HEK293 (cell line): ENCODE measurements at regions of chr7 and their contacts with region 1.

Region 1: DNA sequence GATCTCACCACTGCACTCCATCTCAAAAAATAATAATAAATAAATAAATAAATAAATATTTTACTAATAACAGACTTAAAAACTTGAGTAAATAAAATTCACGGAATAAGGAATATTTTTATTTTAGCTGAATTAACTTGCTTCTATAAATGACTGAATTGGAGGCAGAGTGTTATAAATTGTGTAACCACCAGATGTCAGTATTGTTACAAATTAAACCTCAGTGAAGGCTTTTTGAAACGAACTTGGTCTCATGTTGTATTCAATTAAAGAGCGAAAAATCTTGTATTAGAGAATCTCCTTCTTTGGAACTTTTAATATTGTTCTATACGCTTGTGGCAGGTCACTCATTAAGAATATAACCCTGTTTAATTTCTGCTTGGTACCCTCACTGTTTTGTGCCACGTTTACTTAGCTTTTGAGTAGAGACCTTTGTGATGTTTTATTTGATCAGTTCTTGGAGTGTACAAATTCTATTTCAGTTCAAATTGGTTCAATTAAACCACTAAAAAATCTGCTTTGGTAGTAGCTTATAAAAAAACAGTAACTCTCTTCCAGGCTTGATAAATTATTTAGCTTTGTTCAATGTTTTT is 45.6 kb upstream of the SCIN start:
- H3K4me3 ChIP-seq: no peak overlapping the region
- H3K27ac ChIP-seq: no peak overlapping the region
- H3K4me1 ChIP-seq: no peaks in the 10 kb centered on the region
- CTCF ChIP-seq: no peak

Region 2: GRCh38 chr7:12607134-12607533 is 82.2 kb after region 1 on chr7:
- CTCF ChIA-PET with region 1: interaction called, 11 read pairs
- POLR2A ChIA-PET with region 1: no interaction called
- H3K4me3 ChIP-seq: no peak overlapping the region
- H3K27ac ChIP-seq: no peak overlapping the region
- H3K4me1 ChIP-seq: no peaks in the 10 kb centered on the region
- CTCF ChIP-seq: no peak

Region 3: DNA sequence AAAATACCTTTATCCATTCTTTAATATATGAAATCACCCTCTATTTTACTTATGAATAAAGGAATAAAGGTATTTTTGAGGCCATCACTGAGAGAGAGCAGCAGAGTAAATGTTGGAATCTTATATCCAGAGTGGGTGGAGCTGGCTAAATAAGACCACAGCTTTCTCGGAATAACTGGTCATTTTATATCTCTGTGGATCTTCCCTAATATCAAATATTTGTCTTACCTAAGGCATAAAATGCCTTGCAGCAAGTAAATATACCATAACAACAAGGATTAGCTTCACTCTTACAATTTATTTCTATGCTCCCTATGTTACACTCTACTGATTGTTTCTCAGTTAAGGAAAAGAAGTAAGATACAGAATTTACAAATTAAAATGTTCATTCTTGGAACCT is 93.5 kb after region 1 on chr7:
- CTCF ChIA-PET with region 1: interaction called, 112 read pairs
- POLR2A ChIA-PET with region 1: no interaction called
- H3K4me3 ChIP-seq: no peak overlapping the region
- H3K27ac ChIP-seq: no peak overlapping the region
- H3K4me1 ChIP-seq: no peaks in the 10 kb centered on the region
- CTCF ChIP-seq: no peak

Region 4: GRCh38 chr7:12623897-12624498 is 99.1 kb after region 1 on chr7:
- CTCF ChIA-PET with region 1: interaction called, 112 read pairs
- POLR2A ChIA-PET with region 1: no interaction called
- H3K4me3 ChIP-seq: no peak overlapping the region
- H3K27ac ChIP-seq: no peak overlapping the region
- H3K4me1 ChIP-seq: no peaks in the 10 kb centered on the region
- CTCF ChIP-seq: no peak

Region 5: DNA sequence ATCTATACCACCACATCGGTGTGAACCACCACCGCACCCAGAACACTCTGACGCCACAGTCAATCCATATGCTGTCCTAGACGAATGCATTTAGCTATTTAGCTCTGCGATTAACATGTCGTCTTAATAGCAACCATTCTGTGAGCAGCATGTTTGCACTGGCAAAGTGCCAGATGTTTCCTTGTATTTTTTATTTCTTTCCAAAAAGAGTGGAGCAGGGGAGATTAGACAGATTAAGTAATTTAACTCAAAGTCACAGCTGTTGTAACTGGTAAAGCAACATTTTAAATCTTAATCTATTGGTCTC is 105.6 kb after region 1 on chr7:
- CTCF ChIA-PET with region 1: interaction called, 31 read pairs
- POLR2A ChIA-PET with region 1: no interaction called
- H3K4me3 ChIP-seq: no peak overlapping the region
- H3K27ac ChIP-seq: no peak overlapping the region
- H3K4me1 ChIP-seq: no peaks in the 10 kb centered on the region
- CTCF ChIP-seq: no peak

Region 6: DNA sequence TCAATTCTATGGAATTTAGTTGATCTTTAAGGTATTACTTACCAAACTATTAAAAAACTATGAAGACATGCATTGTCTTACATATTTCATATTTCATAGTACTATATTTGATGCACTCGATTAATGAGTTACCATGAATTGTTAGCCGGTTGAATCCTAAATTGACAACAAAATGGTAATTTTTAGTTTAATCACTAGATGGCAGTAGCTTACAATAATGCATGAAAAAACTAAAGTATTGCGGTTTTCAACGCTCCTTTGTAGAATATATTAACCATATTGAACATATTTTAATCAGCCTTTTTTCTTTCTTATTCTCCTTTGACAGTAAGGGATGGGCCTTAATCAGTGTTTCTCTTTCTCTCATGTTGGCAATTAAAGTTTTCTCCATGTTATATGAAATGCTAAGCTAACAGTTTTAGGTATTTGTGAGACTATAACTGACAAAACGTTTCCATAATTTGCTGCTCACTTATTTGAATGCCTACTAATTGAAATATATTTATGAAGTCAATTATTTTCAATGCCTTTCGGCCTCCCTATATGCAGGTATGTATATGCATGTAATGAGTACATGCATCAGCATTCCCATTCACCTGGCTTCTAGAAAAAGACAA is 114.1 kb after region 1 on chr7:
- CTCF ChIA-PET with region 1: interaction called, 11 read pairs
- POLR2A ChIA-PET with region 1: no interaction called
- H3K4me3 ChIP-seq: no peak overlapping the region
- H3K27ac ChIP-seq: no peak overlapping the region
- H3K4me1 ChIP-seq: no peaks in the 10 kb centered on the region
- CTCF ChIP-seq: no peak

Region 7: GRCh38 chr7:13262929-13263530 is 738.1 kb after region 1 on chr7:
- CTCF ChIA-PET with region 1: interaction called, 12 read pairs
- POLR2A ChIA-PET with region 1: no interaction called
- H3K4me3 ChIP-seq: no peak overlapping the region
- H3K27ac ChIP-seq: no peak overlapping the region
- H3K4me1 ChIP-seq: no peaks in the 10 kb centered on the region
- CTCF ChIP-seq: no peak